Ovary (tissue), 10 donors: ENCODE measurements at regions of chr6 and their contacts with region 1.

Region 1: GRCh38 chr6:143842902-143843676 is at the start of gene LTV1:
- DNase-seq: peak; percentile 95 to 98 (median 97)
- H3K4me3 ChIP-seq: peak within 1 kb of the TSS; percentile 73
- H3K27ac ChIP-seq: peak within 1 kb of the TSS; percentile 79 to 92
- H3K4me1 ChIP-seq: peaks cover 1% of the 10 kb centered on the region
- H3K27me3 ChIP-seq: no peaks in the 10 kb centered on the region
- CTCF ChIP-seq: no peak
- EP300 ChIP-seq: no peak
- POLR2A ChIP-seq: peak; percentile 64
- total RNA-seq, gene LTV1: 11.0 to 36.3 (median 20.4) TPM

Region 2: GRCh38 chr6:143575440-143575839 is 267.6 kb before region 1 on chr6:
- intact Hi-C with region 1: loop called in 1 of 4 experiments (anchors 10 kb)
- DNase-seq: peak in 4 of 5 donors; percentile 18 to 62 (median 25)
- H3K4me3 ChIP-seq: no peak overlapping the region
- H3K27ac ChIP-seq: no peak overlapping the region
- H3K4me1 ChIP-seq: no peaks in the 10 kb centered on the region
- H3K27me3 ChIP-seq: no peaks in the 10 kb centered on the region
- CTCF ChIP-seq: peak; percentile 51 to 92 (median 90)
- EP300 ChIP-seq: no peak
- POLR2A ChIP-seq: no peak

Region 3: GRCh38 chr6:143677891-143678791 is 164.9 kb before region 1 on chr6 and contains the start of gene PHACTR2:
- intact Hi-C with region 1: loop called in 3 of 4 experiments (anchors 5 kb)
- DNase-seq: peak; percentile 75 to 82 (median 77)
- H3K4me3 ChIP-seq: peak within 1 kb of the TSS; percentile 63
- H3K27ac ChIP-seq: peak within 1 kb of the TSS; percentile 88 to 94
- H3K4me1 ChIP-seq: peaks cover 5% of the 10 kb centered on the region
- H3K27me3 ChIP-seq: no peaks in the 10 kb centered on the region
- CTCF ChIP-seq: no peak
- EP300 ChIP-seq: no peak
- POLR2A ChIP-seq: no peak
- total RNA-seq, gene PHACTR2: 29.0 to 76.2 (median 47.9) TPM

Region 4: DNA sequence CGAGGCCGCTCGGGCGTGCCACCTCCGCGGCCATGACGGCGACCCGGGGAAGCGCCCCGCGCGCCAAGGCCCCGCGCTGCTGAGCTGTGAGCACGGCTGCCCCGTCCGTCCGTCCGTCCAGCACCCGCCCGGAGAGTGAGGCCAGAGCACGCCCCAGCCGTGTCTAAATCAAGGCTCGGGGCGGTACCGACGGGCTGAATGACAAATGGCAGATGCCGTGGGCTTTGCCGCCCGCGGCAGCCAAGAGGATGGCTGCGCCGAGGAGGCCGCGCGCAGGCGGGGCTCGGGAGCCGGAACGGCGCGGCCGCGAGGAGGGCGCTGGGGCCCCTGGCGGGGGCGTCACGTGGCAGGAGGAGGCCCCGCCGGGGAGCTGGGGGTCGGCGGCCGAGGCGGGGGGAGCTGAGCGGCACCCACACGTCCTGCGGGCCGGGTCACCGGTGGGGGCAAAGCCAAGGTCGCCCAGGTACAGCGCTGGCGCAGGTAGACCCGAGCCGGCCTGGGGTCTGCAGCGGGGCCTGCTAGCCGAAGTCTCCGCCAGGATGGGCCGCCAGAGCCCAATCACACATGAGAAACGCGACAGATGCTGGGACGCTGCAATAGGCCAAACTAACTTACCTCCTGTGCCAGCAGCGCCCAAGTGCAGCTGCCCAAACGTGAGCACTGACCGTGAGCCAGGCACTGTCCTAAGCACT is 165.2 kb after region 1 on chr6 and contains the start of gene PLAGL1:
- intact Hi-C with region 1: loop called in 1 of 4 experiments (anchors 2 kb)
- DNase-seq: peak; percentile 57 to 76 (median 65)
- H3K4me3 ChIP-seq: peak within 1 kb of the TSS; percentile 61
- H3K27ac ChIP-seq: peak within 1 kb of the TSS; percentile 58 to 80
- H3K4me1 ChIP-seq: peaks cover 1% of the 10 kb centered on the region
- H3K27me3 ChIP-seq: no peaks in the 10 kb centered on the region
- CTCF ChIP-seq: no peak
- EP300 ChIP-seq: no peak
- POLR2A ChIP-seq: no peak
- total RNA-seq, gene PLAGL1: 19.0 to 53.4 (median 32.1) TPM